HEK293 (cell line): ENCODE measurements at regions of chr19 and their contacts with region 1.

Region 1: DNA sequence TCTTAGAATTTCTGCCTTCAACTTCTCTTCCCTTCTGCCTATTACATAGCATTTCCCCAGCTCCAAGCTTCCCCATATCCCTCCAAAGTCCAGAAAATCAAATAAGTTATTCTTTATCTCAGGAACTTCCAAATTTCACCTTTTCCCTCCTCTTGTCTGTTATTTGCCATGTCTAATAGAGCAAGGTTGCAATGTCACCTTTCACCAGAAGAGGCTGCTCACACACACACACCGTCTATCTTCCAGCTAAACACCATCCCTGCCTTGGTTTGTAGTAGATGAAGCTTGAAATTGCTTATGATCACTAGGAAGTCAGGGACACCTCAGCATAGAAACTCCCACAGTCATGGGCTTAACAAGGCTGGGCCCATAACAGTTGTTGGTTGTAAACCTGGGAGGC is 48.4 kb downstream of the ZNRF4 start:
- H3K4me3 ChIP-seq: no peak overlapping the region
- H3K27ac ChIP-seq: no peak overlapping the region
- H3K4me1 ChIP-seq: no peaks in the 10 kb centered on the region
- CTCF ChIP-seq: no peak

Region 2: GRCh38 chr19:5515737-5516136 is 12.1 kb after region 1 on chr19:
- CTCF ChIA-PET with region 1: interaction called, 21 read pairs
- POLR2A ChIA-PET with region 1: no interaction called
- H3K4me3 ChIP-seq: no peak overlapping the region
- H3K27ac ChIP-seq: no peak overlapping the region
- H3K4me1 ChIP-seq: no peaks in the 10 kb centered on the region
- CTCF ChIP-seq: no peak

Region 3: GRCh38 chr19:5753743-5754142 is 250.1 kb after region 1 on chr19:
- CTCF ChIA-PET with region 1: no interaction called
- POLR2A ChIA-PET with region 1: no interaction called
- H3K4me3 ChIP-seq: no peak overlapping the region
- H3K27ac ChIP-seq: no peak overlapping the region
- H3K4me1 ChIP-seq: no peaks in the 10 kb centered on the region
- CTCF ChIP-seq: no peak

Region 4: GRCh38 chr19:5782945-5783934 is 279.6 kb after region 1 on chr19:
- CTCF ChIA-PET with region 1: no interaction called
- POLR2A ChIA-PET with region 1: no interaction called
- H3K4me3 ChIP-seq: no peak overlapping the region
- H3K27ac ChIP-seq: no peak overlapping the region
- H3K4me1 ChIP-seq: no peaks in the 10 kb centered on the region
- CTCF ChIP-seq: no peak